Posterior vena cava (tissue), 2 donors: ENCODE measurements at regions of chr22 and their contacts with region 1.

Region 1: GRCh38 chr22:45590262-45590661 is 81.4 kb upstream of the ATXN10 start:
- DNase-seq: no peak

Region 2: DNA sequence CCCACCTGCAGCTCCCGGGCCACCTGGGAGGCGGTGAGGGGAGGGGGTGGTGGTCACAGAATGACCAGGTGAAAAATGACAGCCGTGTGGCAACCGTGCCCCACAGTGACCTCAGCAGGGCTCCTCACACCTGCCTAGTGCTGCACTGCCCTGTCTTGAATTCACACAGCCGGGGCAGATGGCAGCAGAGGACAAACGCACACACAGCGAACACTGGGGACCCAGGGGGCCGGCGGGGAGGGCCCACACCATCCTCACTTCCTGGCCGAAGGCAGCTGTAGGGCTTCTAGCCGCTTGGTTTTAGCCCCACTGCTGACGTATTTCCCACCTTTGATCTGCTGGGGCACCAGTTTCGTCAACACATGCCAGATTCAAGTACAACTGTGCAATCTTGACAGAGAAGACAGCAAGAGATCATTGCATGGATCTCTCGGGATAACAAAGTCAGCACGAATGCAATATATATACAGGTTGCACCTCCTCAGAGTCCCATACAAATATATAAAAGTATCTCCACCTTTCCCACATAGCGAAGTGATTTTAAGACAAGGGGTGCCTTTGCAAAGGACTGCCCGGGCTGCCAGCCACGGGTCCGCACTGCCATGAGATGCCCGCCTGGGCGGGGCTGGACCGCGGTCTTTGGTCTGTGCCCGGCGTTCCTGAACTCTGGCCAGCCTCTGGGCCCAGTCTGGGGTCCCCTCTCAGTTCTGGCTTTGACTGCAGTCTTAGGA is 772.1 kb after region 1 on chr22:
- intact Hi-C with region 1: loop called in 1 of 2 experiments (anchors 2 kb)
- DNase-seq: peak; percentile 80